BJ (cell line): ENCODE measurements at regions of chr10 and their contacts with region 1.

Region 1: DNA sequence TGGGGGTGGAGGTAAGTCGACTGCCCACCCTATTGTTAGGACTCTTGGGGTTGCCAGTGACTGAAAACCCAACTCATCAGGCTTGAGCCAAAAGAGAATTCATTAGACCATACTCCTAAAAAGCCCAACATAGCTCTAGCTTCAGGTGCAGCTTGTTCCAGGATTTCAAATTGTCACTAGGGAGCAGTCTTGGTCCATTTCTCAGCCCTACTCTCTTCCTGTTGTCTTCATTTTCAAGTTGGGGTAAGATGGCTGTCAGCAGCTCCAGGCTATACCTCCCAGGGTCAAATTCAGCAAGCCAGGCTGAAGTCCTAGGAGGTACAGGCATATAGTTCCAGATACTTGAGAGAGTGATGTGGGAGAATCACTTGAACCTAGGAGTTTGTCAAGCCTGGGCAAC is 14.9 kb upstream of the COL13A1 start:
- DNase-seq: no peak
- H3K4me3 ChIP-seq: no peak overlapping the region
- H3K27me3 ChIP-seq: peaks cover 11% of the 10 kb centered on the region
- CTCF ChIP-seq: peak; percentile 54

Region 2: GRCh38 chr10:69408318-69409175 is 378.2 kb before region 1 on chr10:
- CTCF ChIA-PET with region 1: no interaction called
- POLR2A ChIA-PET with region 1: no interaction called
- DNase-seq: peak; percentile 60
- H3K4me3 ChIP-seq: peak overlapping the region; percentile 42
- H3K27me3 ChIP-seq: no peaks in the 10 kb centered on the region
- CTCF ChIP-seq: peak; percentile 69

Region 3: GRCh38 chr10:69644658-69645295 is 142.0 kb before region 1 on chr10:
- CTCF ChIA-PET with region 1: interaction called, 13 read pairs
- POLR2A ChIA-PET with region 1: no interaction called
- DNase-seq: no peak
- H3K4me3 ChIP-seq: no peak overlapping the region
- H3K27me3 ChIP-seq: peaks cover 6% of the 10 kb centered on the region
- CTCF ChIP-seq: peak; percentile 81

Region 4: GRCh38 chr10:69757553-69758309 is 29.1 kb before region 1 on chr10:
- CTCF ChIA-PET with region 1: interaction called, 11 read pairs
- POLR2A ChIA-PET with region 1: no interaction called
- DNase-seq: no peak
- H3K4me3 ChIP-seq: no peak overlapping the region
- H3K27me3 ChIP-seq: peaks cover 6% of the 10 kb centered on the region
- CTCF ChIP-seq: no peak

Region 5: GRCh38 chr10:69769395-69769992 is 17.3 kb before region 1 on chr10:
- CTCF ChIA-PET with region 1: interaction called, 51 read pairs
- POLR2A ChIA-PET with region 1: no interaction called
- DNase-seq: peak; percentile 55
- H3K4me3 ChIP-seq: no peak overlapping the region
- H3K27me3 ChIP-seq: peaks cover 4% of the 10 kb centered on the region
- CTCF ChIP-seq: no peak

Region 6: GRCh38 chr10:69774596-69774995 is 12.2 kb before region 1 on chr10:
- CTCF ChIA-PET with region 1: interaction called, 51 read pairs
- POLR2A ChIA-PET with region 1: no interaction called
- DNase-seq: no peak
- H3K4me3 ChIP-seq: no peak overlapping the region
- H3K27me3 ChIP-seq: peaks cover 4% of the 10 kb centered on the region
- CTCF ChIP-seq: no peak

Region 7: GRCh38 chr10:69929575-69929974 is 142.8 kb after region 1 on chr10:
- CTCF ChIA-PET with region 1: interaction called, 12 read pairs
- POLR2A ChIA-PET with region 1: no interaction called
- DNase-seq: no peak
- H3K4me3 ChIP-seq: no peak overlapping the region
- H3K27me3 ChIP-seq: no peaks in the 10 kb centered on the region
- CTCF ChIP-seq: no peak